Kidney (tissue), 22 donors: ENCODE measurements at regions of chr13 and their contacts with region 1.

Region 1: DNA sequence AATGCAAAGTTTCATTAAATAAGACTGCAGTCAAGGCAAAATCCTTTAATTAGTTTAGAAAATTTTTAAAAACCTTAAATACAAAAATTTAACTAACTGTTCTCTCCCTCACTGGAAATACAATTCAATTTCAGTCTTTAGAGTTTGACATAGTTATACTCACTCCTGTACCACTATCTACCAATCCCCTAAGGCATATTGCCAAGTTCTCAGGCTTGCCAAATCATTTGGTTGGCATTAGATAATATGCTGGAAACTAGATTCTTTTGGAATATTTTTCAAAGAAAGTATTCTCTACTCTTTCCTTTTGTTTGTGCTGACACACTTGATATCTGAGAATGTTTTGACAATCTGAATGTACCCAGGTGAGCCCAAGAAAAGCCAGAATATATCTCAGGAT is 77.2 kb downstream of the TSC22D1 start:
- DNase-seq: no peak
- H3K4me3 ChIP-seq: no peak overlapping the region
- H3K27ac ChIP-seq: no peak overlapping the region
- H3K4me1 ChIP-seq: no peaks in the 10 kb centered on the region
- H3K27me3 ChIP-seq: no peaks in the 10 kb centered on the region
- CTCF ChIP-seq: no peak

Region 2: GRCh38 chr13:44969551-44970484 is 470.8 kb after region 1 on chr13:
- intact Hi-C with region 1: loop called (anchors 10 kb)
- DNase-seq: peak in 2 of 5 donors; percentile 84 to 87
- H3K4me3 ChIP-seq: no peak overlapping the region
- H3K27ac ChIP-seq: peak overlapping the region in 1 of 2 donors; percentile 52
- H3K4me1 ChIP-seq: peaks cover 2 to 8% (median 3%) of the 10 kb centered on the region in 3 donors
- H3K27me3 ChIP-seq: no peaks in the 10 kb centered on the region
- CTCF ChIP-seq: peak; percentile 87